T-cell (primary cell): ENCODE measurements at regions of chr6 and their contacts with region 1.

Region 1: DNA sequence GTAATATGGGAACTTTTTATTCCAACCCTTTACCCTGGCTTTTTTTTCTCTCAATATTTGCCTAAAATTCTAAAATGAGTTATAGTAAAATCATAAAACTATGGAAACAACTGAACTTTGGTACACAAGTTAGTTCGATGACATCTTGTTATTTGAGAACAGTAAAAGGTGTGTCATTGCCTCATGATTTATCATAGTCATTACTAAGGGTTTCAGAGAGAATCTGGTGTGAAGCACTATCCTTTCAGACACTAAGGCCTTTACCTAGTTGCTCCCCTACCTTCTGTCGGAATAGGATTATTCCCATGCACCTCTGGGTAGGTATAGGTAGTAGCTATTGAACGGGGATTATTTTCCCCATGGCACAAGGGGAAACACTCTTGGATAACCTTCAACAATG is 11.4 kb downstream of the TAF11 start:
- DNase-seq: no peak
- ATAC-seq: no peak
- H3K4me3 ChIP-seq: no peak overlapping the region
- H3K4me3 Mint-ChIP-seq: no peak overlapping the region
- H3K27ac ChIP-seq: no peak overlapping the region
- H3K27ac Mint-ChIP-seq: no peak overlapping the region
- H3K4me1 ChIP-seq: no peaks in the 10 kb centered on the region
- H3K4me1 Mint-ChIP-seq: no peaks in the 10 kb centered on the region
- H3K27me3 ChIP-seq: no peaks in the 10 kb centered on the region
- H3K27me3 Mint-ChIP-seq: no peaks in the 10 kb centered on the region

Region 2: DNA sequence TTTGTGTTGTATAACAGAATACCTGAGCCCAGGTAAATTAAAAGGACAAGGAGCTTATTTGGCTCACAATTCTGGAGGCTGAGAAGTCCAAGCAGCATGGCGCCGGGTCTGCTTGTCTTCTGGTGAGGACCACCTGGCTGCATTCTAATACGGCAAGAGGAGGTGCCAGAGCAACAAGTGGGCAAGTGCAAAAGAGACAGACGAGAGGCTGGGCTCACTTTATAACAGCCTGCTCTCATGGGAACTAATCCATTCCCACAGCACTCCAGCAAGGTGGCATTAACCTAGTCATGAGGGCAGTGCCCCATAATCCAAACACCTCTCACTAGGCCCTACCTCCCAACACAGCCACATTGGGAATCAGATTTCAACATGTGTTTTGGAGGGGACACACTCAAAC is 397.7 kb before region 1 on chr6:
- CTCF ChIA-PET with region 1: no interaction called
- POLR2A ChIA-PET with region 1: interaction called in 1 of 2 experiments, 15 read pairs
- DNase-seq: no peak
- ATAC-seq: no peak
- H3K4me3 ChIP-seq: no peak overlapping the region
- H3K4me3 Mint-ChIP-seq: no peak overlapping the region
- H3K27ac ChIP-seq: no peak overlapping the region
- H3K27ac Mint-ChIP-seq: no peak overlapping the region
- H3K4me1 ChIP-seq: no peaks in the 10 kb centered on the region
- H3K4me1 Mint-ChIP-seq: peaks cover 0 to under 1% (median 0%) of the 10 kb centered on the region in 3 donors
- H3K27me3 ChIP-seq: peaks cover 0 to 3% of the 10 kb centered on the region in 2 experiments
- H3K27me3 Mint-ChIP-seq: no peaks in the 10 kb centered on the region

Region 3: GRCh38 chr6:34760108-34760507 is 116.4 kb before region 1 on chr6:
- CTCF ChIA-PET with region 1: no interaction called
- POLR2A ChIA-PET with region 1: interaction called in 1 of 2 experiments, 10 read pairs
- DNase-seq: no peak
- ATAC-seq: no peak
- H3K4me3 ChIP-seq: no peak overlapping the region
- H3K4me3 Mint-ChIP-seq: no peak overlapping the region
- H3K27ac ChIP-seq: no peak overlapping the region
- H3K27ac Mint-ChIP-seq: no peak overlapping the region
- H3K4me1 ChIP-seq: peaks cover 10 to 19% of the 10 kb centered on the region in 2 experiments
- H3K4me1 Mint-ChIP-seq: peaks cover 10 to 26% (median 17%) of the 10 kb centered on the region in 3 donors
- H3K27me3 ChIP-seq: no peaks in the 10 kb centered on the region
- H3K27me3 Mint-ChIP-seq: no peaks in the 10 kb centered on the region